Activated naive CD4-positive, alpha-beta T cell treated with anti-CD3 and anti-CD28 coated beads for 36 hours (primary cell): ENCODE measurements at regions of chr3 and their contacts with region 1.

Region 1: DNA sequence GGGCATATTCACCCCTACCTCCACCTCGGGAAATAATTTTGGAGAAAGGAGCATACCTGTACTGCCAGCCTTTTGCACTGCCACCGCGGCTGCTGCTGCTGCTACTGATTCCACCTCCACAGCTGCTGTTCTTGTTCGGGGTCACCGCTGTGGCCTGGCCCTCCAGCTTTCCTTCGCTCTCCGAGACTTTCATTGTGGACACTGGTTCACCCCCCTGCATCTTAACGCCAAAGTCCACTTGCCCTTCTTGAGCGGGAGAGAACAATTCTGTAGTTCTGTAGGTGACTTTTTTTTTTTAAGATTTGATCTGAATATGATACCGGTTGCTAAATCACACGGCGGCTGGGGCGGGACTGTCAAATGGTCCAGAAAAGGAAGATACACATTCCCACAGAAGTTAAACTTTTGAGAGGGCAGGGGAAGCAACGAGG is 701 bp downstream of the OSBPL11 start:
- DNase-seq: peak; percentile 14
- H3K4me3 Mint-ChIP-seq: peak overlapping the region; percentile 99
- H3K27ac Mint-ChIP-seq: peak overlapping the region; percentile 88
- H3K4me1 Mint-ChIP-seq: peaks cover 38% of the 10 kb centered on the region
- H3K27me3 Mint-ChIP-seq: no peaks in the 10 kb centered on the region

Region 2: DNA sequence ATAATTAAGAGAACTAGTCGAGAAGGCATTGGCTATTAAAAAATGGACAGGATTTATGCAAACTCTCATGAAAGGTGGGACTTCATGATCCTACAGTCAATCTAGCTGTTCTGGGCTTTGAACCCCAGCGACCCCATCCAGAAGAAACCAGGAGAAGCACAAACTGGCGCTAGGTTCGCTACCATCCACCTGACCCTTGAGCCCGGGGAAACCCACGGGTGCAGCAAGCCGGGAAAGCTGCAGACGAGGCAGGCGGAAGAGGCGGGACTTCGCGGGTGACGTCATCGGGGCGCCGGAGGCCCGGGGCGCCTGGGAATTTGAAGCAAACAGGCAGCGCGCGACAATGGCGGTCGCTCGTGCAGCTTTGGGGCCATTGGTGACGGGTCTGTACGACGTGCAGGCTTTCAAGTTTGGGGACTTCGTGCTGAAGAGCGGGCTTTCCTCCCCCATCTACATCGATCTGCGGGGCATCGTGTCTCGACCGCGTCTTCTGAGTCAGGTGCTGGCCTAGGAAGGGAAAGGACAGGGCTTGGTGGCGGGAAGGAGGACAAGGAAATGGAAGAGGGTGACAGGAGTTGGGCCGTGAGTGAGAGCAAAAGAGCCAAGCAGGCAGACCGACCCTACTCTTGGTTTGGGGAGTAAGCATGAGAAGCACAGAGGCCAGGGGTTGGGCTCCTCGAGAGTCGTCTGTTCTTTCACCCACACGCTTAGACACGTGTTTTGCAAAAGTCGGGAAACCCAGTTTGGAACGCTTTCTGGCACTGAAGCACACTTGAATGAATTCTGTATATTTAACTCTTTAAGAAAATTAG is 864.3 kb before region 1 on chr3 and contains the start of gene UMPS:
- CTCF ChIA-PET with region 1: no interaction called
- intact Hi-C with region 1: loop called (anchors 1 kb)
- DNase-seq: peak; percentile 96
- H3K4me3 Mint-ChIP-seq: peak within 1 kb of the TSS; percentile 99
- H3K27ac Mint-ChIP-seq: peak within 1 kb of the TSS; percentile 95
- H3K4me1 Mint-ChIP-seq: peaks cover 33% of the 10 kb centered on the region
- H3K27me3 Mint-ChIP-seq: peaks cover 7% of the 10 kb centered on the region
- total RNA-seq, gene UMPS: 29.6 to 34.1 TPM

Region 3: GRCh38 chr3:125512135-125512920 is 82.3 kb before region 1 on chr3:
- CTCF ChIA-PET with region 1: no interaction called
- intact Hi-C with region 1: loop called (anchors 2 kb)
- DNase-seq: peak; percentile 83
- H3K4me3 Mint-ChIP-seq: no peak overlapping the region
- H3K27ac Mint-ChIP-seq: peak overlapping the region; percentile 77
- H3K4me1 Mint-ChIP-seq: peaks cover 45% of the 10 kb centered on the region
- H3K27me3 Mint-ChIP-seq: no peaks in the 10 kb centered on the region

Region 4: GRCh38 chr3:125519678-125520589 is 74.7 kb before region 1 on chr3 and contains the start of gene SNX4:
- CTCF ChIA-PET with region 1: no interaction called
- intact Hi-C with region 1: loop called (anchors 1 kb)
- DNase-seq: peak; percentile 89
- H3K4me3 Mint-ChIP-seq: peak within 1 kb of the TSS; percentile 91
- H3K27ac Mint-ChIP-seq: peak within 1 kb of the TSS; percentile 82
- H3K4me1 Mint-ChIP-seq: peaks cover 41% of the 10 kb centered on the region
- H3K27me3 Mint-ChIP-seq: no peaks in the 10 kb centered on the region
- total RNA-seq, gene SNX4: 24.8 to 27.8 TPM